GM12878 (cell line): ENCODE measurements at regions of chr11 and their contacts with region 1.

Region 1: GRCh38 chr11:77467993-77468392 is 5.9 kb downstream of the PAK1 start:
- DNase-seq: no peak
- ATAC-seq: no peak
- H3K4me3 ChIP-seq: peak overlapping the region; percentile 11; the same call in 1 of the 2 replicates
- H3K27ac ChIP-seq: no peak overlapping the region
- H3K4me1 ChIP-seq: peaks cover 18% of the 10 kb centered on the region
- H3K27me3 ChIP-seq: no peaks in the 10 kb centered on the region
- CTCF ChIP-seq: no peak
- EP300 ChIP-seq: no peak
- POLR2A ChIP-seq: no peak
- RAD21 ChIP-seq: no peak

Region 2: DNA sequence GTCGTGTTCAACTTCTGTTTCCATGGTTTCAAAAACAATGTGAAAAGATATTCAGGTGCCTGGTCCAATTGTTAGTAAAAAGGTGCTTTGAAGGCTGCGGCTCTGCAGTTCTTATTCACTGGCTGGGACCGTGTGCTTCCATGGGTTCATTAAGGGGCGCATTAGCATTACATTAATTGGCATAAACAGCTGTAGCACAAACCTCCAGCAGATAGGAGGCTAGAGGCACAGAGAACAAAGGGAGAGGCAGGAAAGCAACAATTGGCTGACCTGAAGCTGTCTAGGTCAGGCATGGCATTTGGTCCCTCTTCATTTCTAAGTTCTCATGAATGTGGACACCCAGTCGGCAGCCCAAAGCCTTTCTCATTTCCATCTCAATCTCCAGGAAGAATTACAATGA is 10.7 kb before region 1 on chr11:
- CTCF ChIA-PET with region 1: interaction called, 119 read pairs
- POLR2A ChIA-PET with region 1: interaction called, 100 read pairs
- RAD21 ChIA-PET with region 1: interaction called, 162 read pairs
- SMC1A ChIA-PET with region 1: interaction called, 289 read pairs
- in situ Hi-C with region 1: no loop called
- intact Hi-C with region 1: no loop called
- DNase-seq: no peak
- ATAC-seq: peak; percentile 52
- H3K4me3 ChIP-seq: peak overlapping the region; percentile 55; the same call in 1 of the 2 replicates
- H3K27ac ChIP-seq: peak overlapping the region; percentile 57
- H3K4me1 ChIP-seq: peaks cover 47% of the 10 kb centered on the region
- H3K27me3 ChIP-seq: no peaks in the 10 kb centered on the region
- CTCF ChIP-seq: no peak
- EP300 ChIP-seq: no peak
- POLR2A ChIP-seq: no peak
- RAD21 ChIP-seq: no peak